ENCODE measurements at regions of chr21 and their contacts with region 1.

Region 1: GRCh38 chr21:43866260-43866629 is 1.2 kb downstream of the AGPAT3 start:
- DNase-seq: peak; percentile 77
- ATAC-seq: peak; percentile 52
- H3K4me3 Mint-ChIP-seq: peak overlapping the region; percentile 77
- H3K27ac Mint-ChIP-seq: peak overlapping the region; percentile 92
- H3K4me1 Mint-ChIP-seq: peaks cover 45% of the 10 kb centered on the region
- H3K27me3 Mint-ChIP-seq: no peaks in the 10 kb centered on the region
- CTCF ChIP-seq: no peak

Region 2: DNA sequence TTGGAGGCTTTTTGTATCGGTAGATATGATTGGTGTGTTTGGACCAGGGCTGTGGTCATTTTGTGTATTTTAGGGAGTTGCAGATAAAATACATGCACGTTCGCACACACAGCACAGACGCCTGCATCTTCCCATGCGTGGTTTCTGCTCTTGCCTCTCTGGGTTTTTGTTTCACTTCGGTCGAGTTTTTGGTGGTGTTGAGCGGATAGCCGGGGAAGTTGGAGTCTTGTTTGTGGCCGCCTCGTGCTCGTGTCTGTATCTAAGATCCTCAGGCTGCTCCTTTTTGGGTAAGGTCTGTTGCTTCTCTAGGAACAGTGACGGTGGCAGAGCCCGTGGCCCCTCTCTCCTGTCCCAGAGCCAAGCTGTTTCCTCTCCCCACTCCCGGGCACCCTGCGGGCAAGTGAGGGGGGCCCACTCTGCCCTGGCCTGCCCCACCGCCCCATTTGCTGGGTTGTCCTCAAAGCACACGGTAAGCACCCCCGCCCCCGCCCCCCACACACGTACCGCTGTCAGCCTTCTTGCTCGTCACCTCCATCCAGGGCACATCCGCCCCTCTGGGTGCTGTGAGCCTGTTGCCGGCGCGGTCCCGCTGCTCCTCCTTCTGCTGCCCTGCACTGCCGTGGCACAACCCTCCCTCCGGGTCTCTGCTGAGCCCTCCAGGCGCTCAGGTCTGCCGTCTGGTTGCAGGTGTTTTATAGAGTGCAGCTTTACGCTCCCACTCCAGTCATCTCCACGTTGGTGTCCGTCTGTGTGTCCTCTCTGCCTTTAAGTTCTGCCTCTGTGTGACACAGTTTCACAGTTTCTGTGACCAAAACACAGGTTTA is 50.7 kb after region 1 on chr21:
- CTCF ChIA-PET with region 1: interaction called, 3 read pairs
- POLR2A ChIA-PET with region 1: interaction called, 3 read pairs
- intact Hi-C with region 1: loop called (anchors 10 kb)
- DNase-seq: peak; percentile 82
- ATAC-seq: peak; percentile 76
- H3K4me3 Mint-ChIP-seq: peak overlapping the region; percentile 79
- H3K27ac Mint-ChIP-seq: peak overlapping the region; percentile 82
- H3K4me1 Mint-ChIP-seq: peaks cover 51% of the 10 kb centered on the region
- H3K27me3 Mint-ChIP-seq: peaks cover 2% of the 10 kb centered on the region
- CTCF ChIP-seq: no peak